Naive thymus-derived CD8-positive, alpha-beta T cell (primary cell): ENCODE measurements at regions of chr16 and their contacts with region 1.

Region 1: DNA sequence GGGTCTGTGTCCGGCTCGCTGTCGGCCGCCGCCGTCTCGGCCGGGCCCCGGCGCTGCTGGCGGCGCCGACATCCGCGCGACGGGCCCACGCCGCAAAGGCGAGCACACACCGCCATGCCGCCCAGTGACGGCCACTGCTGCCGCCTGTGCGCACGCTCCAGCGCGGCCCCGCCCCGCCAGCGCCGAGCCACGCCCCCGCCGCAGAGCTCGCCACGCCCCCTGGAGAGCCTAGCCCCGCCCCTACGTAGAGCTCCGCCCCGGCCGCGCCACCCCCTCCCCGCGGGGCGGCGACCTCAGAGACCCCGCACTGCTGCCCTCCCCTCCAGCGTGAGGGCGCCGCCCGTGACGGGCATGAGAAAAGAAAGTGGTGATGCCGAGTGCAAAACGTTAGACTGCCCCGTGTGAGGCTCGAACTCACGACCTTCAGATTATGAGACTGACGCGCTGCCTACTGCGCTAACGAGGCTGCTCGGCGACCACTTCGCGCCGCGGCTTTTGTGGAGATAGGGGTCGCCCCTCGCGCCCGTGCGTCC is at the start of gene FBXO31:
- DNase-seq: peak; percentile 80 to 96 (median 92)
- ATAC-seq: peak; percentile 66 to 69
- H3K4me3 Mint-ChIP-seq: peak within 1 kb of the TSS; percentile 81 to 96 (median 92)
- H3K27ac Mint-ChIP-seq: peak within 1 kb of the TSS; percentile 91 to 100 (median 96)
- H3K4me1 Mint-ChIP-seq: peaks cover 26 to 70% (median 57%) of the 10 kb centered on the region in 4 donors
- H3K27me3 Mint-ChIP-seq: peaks cover 0 to 3% (median 0%) of the 10 kb centered on the region in 5 donors
- polyA plus RNA-seq, gene FBXO31: 15.4 to 36.4 (median 23.3) TPM

Region 2: GRCh38 chr16:87344931-87345631 is 38.6 kb before region 1 on chr16:
- POLR2A ChIA-PET with region 1: interaction called, 14 read pairs
- DNase-seq: peak in 8 of 10 donors; percentile 27 to 75 (median 42)
- ATAC-seq: peak; percentile 85 to 89
- H3K4me3 Mint-ChIP-seq: peak overlapping the region; percentile 64 to 83 (median 74)
- H3K27ac Mint-ChIP-seq: peak overlapping the region in 9 of 10 donors; percentile 63 to 98 (median 94)
- H3K4me1 Mint-ChIP-seq: peaks cover 20 to 54% (median 32%) of the 10 kb centered on the region in 4 donors
- H3K27me3 Mint-ChIP-seq: no peaks in the 10 kb centered on the region